A673 (cell line): ENCODE measurements at regions of chr6 and their contacts with region 1.

Region 1: DNA sequence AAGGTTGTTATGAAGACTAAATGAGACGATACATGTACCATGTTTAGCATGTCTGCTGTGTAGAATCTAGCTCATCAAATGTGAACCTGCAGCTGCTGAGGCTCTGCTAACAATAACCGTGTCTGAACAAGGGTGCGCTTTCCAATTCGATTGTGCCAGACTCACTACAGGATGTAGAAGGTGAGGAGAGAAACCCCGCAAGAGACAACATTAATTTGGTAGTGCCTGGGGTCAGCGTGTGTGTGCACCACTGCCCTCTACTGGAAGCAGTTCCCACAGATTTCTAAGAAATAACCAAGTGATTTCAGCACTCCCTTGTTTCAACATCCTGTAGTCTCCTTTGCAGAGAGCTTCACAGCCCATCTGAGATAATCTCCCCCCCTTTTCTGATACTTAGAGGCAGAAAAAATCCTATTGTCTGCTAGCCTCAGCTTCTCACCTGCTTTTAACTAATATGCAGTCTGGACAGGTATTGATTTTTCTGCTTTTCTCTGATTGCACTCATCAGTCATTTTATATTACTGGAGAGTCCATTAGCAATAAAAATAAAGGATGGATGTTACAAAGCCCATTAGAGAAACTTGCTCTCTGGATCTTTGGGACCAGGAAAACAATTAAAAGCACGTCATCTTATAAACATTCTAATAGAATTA is 96.7 kb upstream of the BACH2 start:
- DNase-seq: peak; percentile 66
- H3K4me3 ChIP-seq: no peak overlapping the region
- H3K27ac ChIP-seq: no peak overlapping the region
- H3K4me1 ChIP-seq: no peaks in the 10 kb centered on the region
- H3K27me3 ChIP-seq: peaks cover 14% of the 10 kb centered on the region
- CTCF ChIP-seq: peak; percentile 80

Region 2: DNA sequence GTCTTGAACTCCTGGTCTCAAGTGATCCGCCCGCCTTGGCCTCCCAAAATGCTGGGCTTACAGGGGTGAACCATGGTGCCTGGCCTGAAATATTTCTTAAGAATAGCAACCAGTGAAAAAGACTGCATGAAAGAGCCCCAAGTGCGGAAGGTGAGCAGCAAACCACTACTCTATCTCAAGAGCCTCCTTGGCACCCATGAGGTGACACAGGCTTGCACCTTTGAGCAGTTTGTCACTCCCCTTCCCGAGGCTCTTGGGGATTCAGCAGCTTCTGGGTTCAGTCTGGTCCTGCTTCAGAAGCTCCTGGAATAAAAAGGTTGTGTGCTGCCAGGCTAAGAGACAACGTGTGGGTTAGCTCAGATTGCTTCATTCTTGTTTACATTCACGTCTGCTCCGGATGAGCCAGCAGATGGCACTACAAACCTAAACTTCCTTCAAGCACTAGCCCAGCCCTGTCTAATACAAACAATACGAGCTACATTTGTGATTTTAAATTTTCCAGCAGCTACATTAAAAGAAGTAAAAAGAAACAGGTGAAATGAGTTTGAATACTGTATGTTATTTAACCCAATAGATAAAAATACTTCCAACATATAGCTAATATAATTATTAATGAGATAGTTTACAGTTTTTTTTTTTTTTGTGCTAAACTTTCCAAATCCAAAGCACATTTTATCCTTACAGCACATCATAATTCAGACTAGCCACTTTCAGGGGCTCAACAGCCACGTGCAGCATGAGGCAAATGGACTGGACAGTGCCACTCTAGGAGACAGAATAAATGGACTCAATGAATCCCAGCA is 452.9 kb before region 1 on chr6:
- CTCF ChIA-PET with region 1: interaction called, 10 read pairs
- POLR2A ChIA-PET with region 1: no interaction called
- intact Hi-C with region 1: loop called (anchors 2 kb)
- DNase-seq: peak; percentile 82
- H3K4me3 ChIP-seq: no peak overlapping the region
- H3K27ac ChIP-seq: no peak overlapping the region
- H3K4me1 ChIP-seq: no peaks in the 10 kb centered on the region
- H3K27me3 ChIP-seq: no peaks in the 10 kb centered on the region
- CTCF ChIP-seq: peak; percentile 81

Region 3: DNA sequence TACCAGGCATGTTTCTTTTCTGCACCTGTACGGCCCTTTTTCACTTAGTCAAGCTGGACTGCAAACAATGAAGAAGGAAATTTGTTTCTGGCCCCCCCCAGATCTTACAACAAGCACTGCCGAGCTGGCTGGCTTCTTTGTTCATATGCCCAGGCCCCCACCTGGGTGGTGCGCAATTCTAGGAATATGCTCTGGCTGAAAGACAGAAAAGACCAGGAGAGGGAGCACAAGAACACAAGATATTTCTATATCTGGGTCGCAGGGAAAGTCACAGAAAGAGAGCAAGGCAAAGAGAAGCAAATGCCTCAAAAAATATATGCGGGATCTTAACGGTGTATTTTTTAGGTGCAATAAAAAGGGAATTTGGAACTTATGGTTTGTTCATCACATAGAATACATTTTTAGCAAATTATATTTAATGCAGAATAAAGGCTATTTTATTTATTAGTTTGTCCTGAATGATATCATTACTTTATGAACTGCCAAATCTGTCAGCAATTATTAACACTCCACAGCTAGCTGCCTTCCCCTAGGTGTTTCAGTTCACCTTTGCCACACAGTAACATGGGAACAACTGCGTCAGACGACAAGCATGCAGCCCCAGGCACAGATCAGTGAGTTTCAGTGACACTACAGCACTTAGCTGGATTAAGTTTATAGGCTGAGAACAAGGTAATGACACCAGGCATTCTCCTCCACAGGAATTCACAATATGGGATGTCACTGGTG is 422.6 kb before region 1 on chr6:
- CTCF ChIA-PET with region 1: no interaction called
- POLR2A ChIA-PET with region 1: no interaction called
- intact Hi-C with region 1: loop called (anchors 1 kb)
- DNase-seq: peak; percentile 77
- H3K4me3 ChIP-seq: no peak overlapping the region
- H3K27ac ChIP-seq: no peak overlapping the region
- H3K4me1 ChIP-seq: no peaks in the 10 kb centered on the region
- H3K27me3 ChIP-seq: peaks cover 20% of the 10 kb centered on the region
- CTCF ChIP-seq: peak; percentile 79

Region 4: DNA sequence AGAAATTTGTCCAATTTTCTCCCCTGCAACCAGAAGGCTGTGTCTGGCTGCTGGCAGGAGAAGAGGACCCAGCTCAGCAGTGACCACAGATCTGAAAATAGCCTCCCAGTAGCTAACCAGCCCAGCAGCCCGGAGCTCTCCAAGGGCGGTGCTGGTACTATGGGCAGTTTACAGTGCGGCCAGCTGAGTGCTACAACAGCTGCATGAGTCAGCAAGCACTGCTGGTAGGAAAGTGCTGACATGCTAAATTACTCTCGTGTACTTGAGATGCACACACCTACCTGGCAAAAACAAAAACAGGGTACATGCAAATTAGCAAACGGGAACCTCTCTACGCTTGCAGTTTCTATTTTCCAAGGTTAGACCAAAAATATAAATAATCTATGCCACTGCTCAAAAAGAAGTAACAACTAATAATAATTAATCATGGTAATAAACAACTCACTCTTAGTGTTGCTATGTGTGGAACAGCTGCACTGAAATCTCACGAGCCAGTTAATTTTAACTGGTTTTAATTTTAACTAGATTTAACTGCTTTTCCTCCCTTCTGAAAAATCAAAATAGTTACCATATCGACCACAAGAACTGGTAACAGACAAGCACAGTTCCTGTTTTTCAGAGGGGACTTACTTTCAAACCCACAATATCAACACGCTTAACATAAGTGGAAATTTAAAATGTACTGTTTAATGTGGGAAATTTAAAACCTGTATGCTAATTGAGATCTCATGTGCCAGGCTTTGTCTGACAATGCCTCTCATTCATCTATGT is 107.6 kb before region 1 on chr6:
- CTCF ChIA-PET with region 1: no interaction called
- POLR2A ChIA-PET with region 1: no interaction called
- intact Hi-C with region 1: loop called (anchors 5 kb)
- DNase-seq: no peak
- H3K4me3 ChIP-seq: no peak overlapping the region
- H3K27ac ChIP-seq: no peak overlapping the region
- H3K4me1 ChIP-seq: peaks cover 11% of the 10 kb centered on the region
- H3K27me3 ChIP-seq: peaks cover under 1% of the 10 kb centered on the region
- CTCF ChIP-seq: no peak

Region 5: DNA sequence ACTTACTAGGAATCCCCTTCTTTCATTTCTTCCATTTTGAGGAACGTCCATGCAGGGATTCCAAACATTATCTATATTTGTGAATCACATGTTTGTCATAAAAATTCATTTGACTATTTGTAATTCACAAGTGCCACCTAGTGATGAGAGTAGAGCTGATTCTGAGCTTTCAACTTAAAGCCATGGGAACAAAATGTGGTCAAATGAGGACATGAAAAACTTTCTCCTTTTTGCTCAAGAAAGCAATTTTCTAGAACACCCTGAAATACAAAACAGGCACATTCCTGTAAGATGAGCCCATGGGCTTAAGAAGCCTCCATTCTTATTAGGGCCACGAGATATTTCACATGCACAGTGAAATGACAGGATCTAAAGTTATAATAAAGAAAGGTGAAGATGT is 181.3 kb after region 1 on chr6:
- CTCF ChIA-PET with region 1: no interaction called
- POLR2A ChIA-PET with region 1: no interaction called
- intact Hi-C with region 1: loop called (anchors 10 kb)
- DNase-seq: peak; percentile 29
- H3K4me3 ChIP-seq: no peak overlapping the region
- H3K27ac ChIP-seq: no peak overlapping the region
- H3K4me1 ChIP-seq: no peaks in the 10 kb centered on the region
- H3K27me3 ChIP-seq: no peaks in the 10 kb centered on the region
- CTCF ChIP-seq: peak; percentile 47

Region 6: GRCh38 chr6:90829311-90829710 is 436.0 kb after region 1 on chr6:
- CTCF ChIA-PET with region 1: no interaction called
- POLR2A ChIA-PET with region 1: no interaction called
- intact Hi-C with region 1: no loop called
- DNase-seq: no peak
- H3K4me3 ChIP-seq: no peak overlapping the region
- H3K27ac ChIP-seq: no peak overlapping the region
- H3K4me1 ChIP-seq: no peaks in the 10 kb centered on the region
- H3K27me3 ChIP-seq: peaks cover 17% of the 10 kb centered on the region
- CTCF ChIP-seq: no peak

Region 7: DNA sequence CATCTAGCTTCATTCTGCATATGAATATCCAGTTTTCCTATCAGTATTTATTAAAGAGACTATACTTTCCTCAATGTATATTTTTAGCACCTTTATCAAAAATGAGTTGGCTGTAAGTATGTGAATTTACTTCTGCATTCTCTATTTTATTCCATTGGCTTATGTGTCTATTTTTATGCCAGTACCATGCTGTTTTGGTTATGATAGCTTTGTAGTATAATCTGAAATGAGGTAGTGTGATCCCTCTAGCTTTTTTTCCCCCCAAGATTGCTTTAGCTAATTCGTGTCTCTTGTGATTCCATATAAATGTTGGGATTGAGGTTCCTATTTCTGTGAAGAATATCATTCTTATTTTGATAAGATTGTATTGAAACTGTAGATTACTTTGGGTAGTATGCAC is 662.6 kb after region 1 on chr6:
- CTCF ChIA-PET with region 1: no interaction called
- POLR2A ChIA-PET with region 1: no interaction called
- intact Hi-C with region 1: no loop called
- DNase-seq: no peak
- H3K4me3 ChIP-seq: no peak overlapping the region
- H3K27ac ChIP-seq: no peak overlapping the region
- H3K4me1 ChIP-seq: no peaks in the 10 kb centered on the region
- H3K27me3 ChIP-seq: no peaks in the 10 kb centered on the region
- CTCF ChIP-seq: no peak